Left ventricle myocardium superior (tissue), 1 donor: ENCODE measurements at regions of chr18 and their contacts with region 1.

Region 1: DNA sequence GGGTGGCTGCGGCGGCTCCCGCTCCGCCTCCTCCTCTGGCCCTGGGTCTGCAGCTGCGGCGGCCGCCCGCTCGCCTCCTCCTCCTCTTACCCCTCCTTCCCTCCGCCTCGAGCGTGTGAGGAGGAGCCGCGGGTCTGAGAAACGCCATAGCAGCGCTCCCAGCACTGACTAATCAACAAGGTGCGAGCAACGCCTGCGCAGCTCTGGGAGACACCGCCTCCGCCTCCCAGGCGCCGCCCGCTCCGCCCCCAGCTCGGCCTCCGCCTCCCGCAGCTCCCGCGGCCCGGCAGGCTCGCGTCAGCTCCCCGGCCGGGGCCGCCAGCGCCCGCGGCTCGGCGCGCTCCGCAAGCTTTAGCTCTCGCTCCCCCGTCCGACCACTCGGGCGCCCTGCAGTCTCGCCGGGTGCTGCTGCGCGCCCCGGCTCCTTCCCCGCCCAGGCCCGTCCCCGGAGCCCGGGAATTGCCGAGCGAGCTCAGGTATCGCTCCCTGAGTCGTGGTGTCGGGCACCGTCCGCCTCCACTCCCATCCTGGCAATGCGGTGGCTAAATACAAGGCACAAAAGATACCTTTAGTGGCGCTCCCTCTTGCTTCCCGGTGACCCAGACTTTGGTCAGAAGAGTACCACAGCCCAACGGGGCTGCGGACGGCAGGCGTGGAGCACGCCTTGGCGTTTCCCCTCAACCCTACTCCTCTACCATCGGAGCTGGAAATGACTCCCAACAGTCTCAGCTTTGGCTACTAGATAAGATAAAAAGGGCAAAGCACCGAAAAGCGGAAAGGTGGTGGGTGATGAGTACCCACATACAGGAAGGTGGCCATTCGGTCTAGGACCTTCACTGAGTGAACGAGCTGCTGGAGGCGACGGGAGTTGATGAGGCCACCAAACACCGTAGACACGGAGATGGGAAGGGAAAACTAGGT is at the start of gene GAREM1:
- DNase-seq: peak; percentile 97
- ATAC-seq: peak; percentile 97
- total RNA-seq, gene GAREM1: 20.8 TPM

Region 2: DNA sequence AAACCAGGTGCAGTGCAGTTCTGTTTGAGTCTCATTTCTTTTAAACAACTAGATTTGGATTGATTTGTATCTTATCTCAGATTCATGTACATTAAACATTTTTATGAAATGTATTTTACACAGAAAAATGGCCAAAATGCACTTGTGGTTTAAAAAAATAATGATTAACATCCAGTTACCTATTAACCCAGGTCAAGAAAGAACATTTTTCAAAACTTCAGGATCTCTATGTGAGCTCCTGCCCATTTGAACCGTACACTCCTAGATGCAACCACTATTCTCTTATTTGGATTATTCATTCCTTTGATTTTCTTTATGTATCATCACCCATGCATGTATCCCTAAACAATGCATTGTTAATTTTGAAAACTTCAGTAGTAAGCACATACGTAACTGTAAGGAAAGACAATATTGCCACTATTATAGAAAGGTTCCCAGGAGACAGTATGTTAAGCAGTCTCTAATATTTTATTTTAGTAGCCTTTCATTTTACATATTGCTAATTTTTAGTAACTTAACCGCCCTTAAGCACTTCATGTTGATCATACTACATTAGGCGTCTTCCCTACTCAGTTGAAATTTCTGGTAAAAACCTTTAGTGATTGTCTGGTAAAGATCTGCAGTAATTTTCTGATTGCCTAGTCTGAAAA is 356.6 kb before region 1 on chr18:
- intact Hi-C with region 1: no loop called
- DNase-seq: no peak
- ATAC-seq: no peak

Region 3: GRCh38 chr18:32271672-32272208 is 199.2 kb before region 1 on chr18:
- intact Hi-C with region 1: loop called (anchors 5 kb)
- DNase-seq: no peak
- ATAC-seq: peak; percentile 81

Region 4: GRCh38 chr18:32289483-32290075 is 181.4 kb before region 1 on chr18:
- intact Hi-C with region 1: loop called (anchors 5 kb)
- DNase-seq: no peak
- ATAC-seq: peak; percentile 75

Region 5: DNA sequence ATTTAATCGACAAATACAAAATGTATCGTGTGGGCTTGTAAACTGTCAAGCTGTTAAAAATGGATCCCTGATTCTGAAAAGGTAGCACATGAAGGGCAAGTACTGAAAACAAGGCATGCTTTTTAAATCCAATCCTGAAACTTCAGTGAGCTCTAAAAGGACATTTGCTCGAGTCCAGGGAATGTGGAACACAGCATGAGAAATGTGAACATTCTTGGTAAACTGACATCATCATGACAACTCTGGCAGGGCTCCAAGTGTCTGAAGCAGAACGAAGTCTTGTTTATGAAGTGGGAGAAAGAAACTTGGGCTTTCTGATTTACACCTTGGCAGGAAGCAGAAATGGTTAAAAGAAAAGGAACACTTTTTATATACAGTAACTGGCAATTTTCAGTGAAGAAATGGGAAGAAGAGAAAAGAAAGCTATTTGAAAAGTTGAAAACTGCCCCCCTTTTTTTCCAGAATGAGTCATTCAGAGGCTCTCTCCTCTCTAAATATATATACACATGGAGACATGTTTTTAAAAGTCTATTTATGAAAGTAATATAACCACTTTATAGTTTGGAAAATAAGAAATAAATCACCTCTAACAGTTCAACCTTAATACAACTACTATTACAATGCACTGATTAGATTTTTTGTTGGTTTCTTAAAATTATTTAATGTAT is 121.1 kb before region 1 on chr18:
- intact Hi-C with region 1: loop called (anchors 10 kb)
- DNase-seq: peak; percentile 40
- ATAC-seq: peak; percentile 81